ENCODE measurements at regions of chr11 and their contacts with region 1.

Region 1: DNA sequence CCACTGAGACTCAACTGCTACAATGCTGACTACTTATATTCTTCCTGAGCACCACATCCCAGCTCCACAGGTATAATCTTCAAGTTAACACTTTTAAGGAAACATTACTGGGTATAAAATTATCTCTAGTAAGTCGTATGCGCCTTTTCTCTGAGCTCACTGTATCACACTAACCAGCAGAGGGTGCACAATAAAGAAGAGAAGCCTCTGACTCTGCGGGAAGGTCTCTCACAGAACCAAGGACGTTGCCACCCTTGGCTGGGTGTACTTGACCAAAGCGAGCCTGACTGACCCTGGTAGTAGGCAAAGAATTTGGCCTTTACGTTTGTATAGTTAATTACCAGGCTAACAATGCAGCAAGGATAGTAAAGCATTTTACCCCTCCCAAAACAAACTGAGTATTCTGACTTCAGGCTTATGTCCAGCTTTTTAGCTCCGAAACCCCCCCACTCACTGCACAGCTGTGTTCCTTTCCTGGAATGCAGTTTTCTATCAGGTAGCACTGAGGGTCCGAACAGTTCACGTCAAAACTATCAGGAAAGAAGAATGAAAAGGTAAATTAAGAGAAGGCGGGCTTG is at the start of gene BTBD18:
- DNase-seq: no peak
- ATAC-seq: peak; percentile 91
- H3K4me3 ChIP-seq: no peak within 1 kb of the TSS
- H3K27ac ChIP-seq: peak within 1 kb of the TSS; percentile 12; the same call in 1 of the 2 replicates
- H3K4me1 ChIP-seq: no peaks in the 10 kb centered on the region; the same call in 1 of the 2 replicates
- H3K27me3 ChIP-seq: no peaks in the 10 kb centered on the region
- CTCF ChIP-seq: peak; percentile 81
- total RNA-seq, gene BTBD18: not detected

Region 2: GRCh38 chr11:57800444-57801182 is 48.8 kb after region 1 on chr11:
- CTCF ChIA-PET with region 1: interaction called, 34 read pairs
- POLR2A ChIA-PET with region 1: no interaction called
- in situ Hi-C with region 1: no loop called
- intact Hi-C with region 1: loop called (anchors 1 kb)
- DNase-seq: peak; percentile 59
- ATAC-seq: peak; percentile 76
- H3K4me3 ChIP-seq: no peak overlapping the region
- H3K27ac ChIP-seq: peak overlapping the region; percentile 88
- H3K4me1 ChIP-seq: peaks cover 33% of the 10 kb centered on the region
- H3K27me3 ChIP-seq: no peaks in the 10 kb centered on the region
- CTCF ChIP-seq: peak; percentile 84

Region 3: DNA sequence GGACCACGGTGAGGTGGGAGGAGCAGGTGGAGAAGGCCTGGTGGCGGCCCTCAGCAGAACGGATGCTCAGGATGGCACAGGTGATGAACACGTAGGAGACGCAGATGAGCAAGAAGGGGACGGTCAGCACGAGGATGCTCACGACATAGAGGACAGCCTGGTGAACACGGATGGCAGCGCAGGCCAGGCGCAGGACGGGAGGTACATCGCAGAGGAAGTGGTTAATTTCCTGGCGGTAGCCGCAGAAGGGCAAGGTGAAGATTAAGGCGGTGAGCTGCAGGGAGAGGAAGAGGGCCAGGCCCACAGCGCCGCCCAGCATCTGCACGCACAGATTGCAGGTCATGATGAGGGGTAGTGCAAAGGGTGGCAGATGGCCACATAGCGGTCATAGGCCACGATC is 540.3 kb after region 1 on chr11:
- CTCF ChIA-PET with region 1: no interaction called
- POLR2A ChIA-PET with region 1: no interaction called
- in situ Hi-C with region 1: no loop called
- intact Hi-C with region 1: no loop called
- DNase-seq: no peak
- ATAC-seq: no peak
- H3K4me3 ChIP-seq: no peak overlapping the region
- H3K27ac ChIP-seq: no peak overlapping the region
- H3K4me1 ChIP-seq: no peaks in the 10 kb centered on the region
- H3K27me3 ChIP-seq: peaks cover under 1% of the 10 kb centered on the region; the same call in 1 of the 2 replicates
- CTCF ChIP-seq: no peak